Left lung (tissue), 14 donors: ENCODE measurements at regions of chr19 and their contacts with region 1.

Region 1: GRCh38 chr19:15555759-15556633 is 47.7 kb downstream of the CYP4F22 start:
- DNase-seq: peak; percentile 76 to 97 (median 90)
- ATAC-seq: peak; percentile 97
- H3K4me3 ChIP-seq: peak overlapping the region; percentile 10 to 34
- H3K27ac ChIP-seq: peak overlapping the region in 1 of 2 donors; percentile 28
- H3K4me1 ChIP-seq: peaks cover 0 to 20% of the 10 kb centered on the region in 2 donors
- H3K27me3 ChIP-seq: peaks cover 6 to 73% of the 10 kb centered on the region in 2 donors
- CTCF ChIP-seq: peak; percentile 51 to 62

Region 2: DNA sequence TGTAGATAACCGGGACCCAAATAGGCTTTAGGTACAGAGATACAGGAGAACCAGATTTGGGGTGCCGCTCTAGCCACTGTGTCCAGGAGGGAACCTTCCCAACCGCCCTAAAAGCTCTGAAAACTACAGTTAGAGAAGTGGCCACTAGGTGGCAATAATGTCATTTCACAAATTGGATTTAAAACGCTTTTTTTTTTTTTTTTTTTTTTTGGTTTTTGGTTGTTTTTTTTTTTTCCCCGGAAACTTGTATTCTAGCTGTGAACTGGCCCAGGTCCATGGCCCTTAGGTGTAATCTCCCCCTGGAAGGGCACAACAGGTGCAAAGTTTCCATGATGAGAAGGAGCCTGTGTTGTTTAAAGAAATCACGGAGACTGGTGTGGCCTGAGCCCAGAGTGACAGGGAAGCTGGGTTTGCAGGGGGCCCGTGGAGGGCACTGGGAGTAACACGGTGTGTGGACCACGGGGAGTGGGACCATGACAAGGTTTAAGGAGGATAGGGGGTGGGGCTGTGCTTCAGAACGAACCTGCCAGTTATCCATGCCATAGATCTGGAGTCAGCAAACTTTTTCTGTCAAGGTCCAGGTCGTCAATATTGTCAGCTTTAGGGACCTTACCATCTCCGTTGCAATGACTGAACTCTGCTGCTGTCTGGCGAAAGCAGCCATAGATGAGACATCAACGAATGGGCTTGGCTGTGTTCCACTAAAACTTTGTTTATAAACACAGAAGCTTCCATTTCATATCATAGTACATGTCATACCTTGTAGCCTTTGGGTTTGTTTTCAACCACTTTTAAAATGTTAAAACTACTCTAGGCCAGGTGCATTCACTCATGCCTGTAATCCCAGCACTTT is 463.9 kb before region 1 on chr19:
- intact Hi-C with region 1: loop called in 1 of 2 experiments (anchors 10 kb)
- DNase-seq: peak in 2 of 4 donors; percentile 57 to 81
- ATAC-seq: peak; percentile 84
- H3K4me3 ChIP-seq: no peak overlapping the region
- H3K27ac ChIP-seq: no peak overlapping the region
- H3K4me1 ChIP-seq: no peaks in the 10 kb centered on the region
- H3K27me3 ChIP-seq: peaks cover 0 to 9% of the 10 kb centered on the region in 2 donors
- CTCF ChIP-seq: peak; percentile 60 to 81

Region 3: DNA sequence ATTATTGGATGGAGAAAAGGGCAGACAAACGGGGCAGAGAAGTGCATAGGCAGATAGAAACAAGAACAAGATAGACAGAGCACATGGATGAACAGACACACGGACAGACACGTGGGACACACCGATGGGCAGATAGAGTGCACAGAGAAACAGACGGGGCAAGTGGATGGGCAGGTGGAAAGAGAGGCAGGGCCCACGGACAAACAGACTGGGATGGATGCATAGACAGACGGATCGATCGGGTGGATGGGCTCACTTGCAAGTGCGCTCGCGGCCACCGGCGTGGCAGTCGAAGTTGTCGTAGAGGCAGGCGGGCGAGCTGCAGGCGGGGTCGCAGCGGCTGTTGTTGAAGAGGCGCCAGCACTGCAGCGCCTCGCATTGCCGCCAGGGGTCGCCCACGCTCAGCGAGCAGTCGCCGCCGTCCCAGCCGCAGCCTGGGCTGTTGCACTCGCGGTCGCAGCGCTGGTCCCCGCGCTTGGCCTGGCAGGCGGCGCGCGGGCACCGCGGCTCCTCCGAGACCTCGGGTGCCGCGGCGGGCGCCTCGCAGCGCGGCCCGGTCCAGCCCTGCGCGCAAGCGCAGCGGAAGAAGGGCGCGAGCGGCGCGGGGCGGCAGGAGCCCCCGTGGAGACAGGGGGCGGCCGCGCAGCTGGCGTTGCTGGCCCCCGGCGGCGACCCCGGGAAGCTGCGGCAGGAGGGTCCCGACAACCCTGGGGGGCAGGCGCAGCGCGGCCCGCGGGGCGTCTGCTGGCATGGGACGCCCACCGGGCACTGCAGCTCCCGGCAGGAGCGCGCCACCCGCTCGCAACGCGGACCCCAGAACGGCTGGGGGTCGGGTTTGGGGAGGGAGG is 378.5 kb before region 1 on chr19:
- intact Hi-C with region 1: loop called in 1 of 2 experiments (anchors 5 kb)
- DNase-seq: peak; percentile 72 to 99 (median 85)
- ATAC-seq: peak; percentile 87
- H3K4me3 ChIP-seq: no peak overlapping the region
- H3K27ac ChIP-seq: no peak overlapping the region
- H3K4me1 ChIP-seq: peaks cover 0 to 10% of the 10 kb centered on the region in 2 donors
- H3K27me3 ChIP-seq: peaks cover 0 to 19% of the 10 kb centered on the region in 2 donors
- CTCF ChIP-seq: peak; percentile 95 to 97

Region 4: DNA sequence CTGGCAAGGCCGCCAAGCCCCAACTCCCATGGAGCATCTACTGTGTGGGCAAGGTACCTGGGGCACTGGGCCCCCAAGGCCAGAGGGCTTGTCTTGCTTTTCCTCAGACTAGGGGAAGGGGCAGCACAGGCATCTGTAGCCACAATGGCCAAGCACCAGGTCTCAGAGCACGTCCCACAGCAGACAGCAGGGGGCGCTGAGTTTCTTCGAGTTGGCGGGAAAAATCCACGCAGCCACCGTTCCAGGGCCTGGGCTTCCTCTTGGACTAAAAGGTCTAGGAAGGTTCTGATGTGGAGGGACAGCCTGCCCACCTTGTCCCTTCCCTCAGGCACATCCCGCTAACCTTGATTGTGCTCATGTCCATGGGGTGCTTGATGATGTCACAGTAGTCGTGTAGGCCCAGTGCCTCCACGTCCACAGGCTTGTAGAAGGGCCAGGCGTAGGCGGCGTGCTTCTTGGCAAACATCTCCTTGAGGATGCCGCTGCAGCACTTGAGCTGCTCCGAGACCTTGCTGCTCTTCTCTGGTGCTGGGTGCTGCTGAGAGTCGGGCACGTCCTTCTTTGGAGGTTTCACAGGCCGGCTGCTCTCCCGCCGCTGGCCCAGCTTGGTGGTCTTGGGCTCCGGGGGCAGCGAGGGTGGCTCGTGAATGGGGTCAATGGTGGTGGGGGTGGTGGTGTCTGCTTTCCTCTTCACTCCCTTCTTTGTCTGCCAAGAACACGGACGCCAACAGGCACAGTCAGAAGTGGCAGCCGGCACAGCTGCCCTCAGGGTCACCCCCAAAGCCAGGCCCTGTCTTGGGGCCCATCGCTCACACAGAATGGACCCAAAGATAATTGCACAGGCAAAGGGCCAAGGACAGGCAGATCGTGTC is 291.7 kb before region 1 on chr19:
- intact Hi-C with region 1: loop called in 1 of 2 experiments (anchors 5 kb)
- DNase-seq: peak; percentile 25 to 88 (median 68)
- ATAC-seq: peak; percentile 66
- H3K4me3 ChIP-seq: no peak overlapping the region
- H3K27ac ChIP-seq: peak overlapping the region in 1 of 2 donors; percentile 64
- H3K4me1 ChIP-seq: peaks cover 20 to 46% of the 10 kb centered on the region in 2 donors
- H3K27me3 ChIP-seq: no peaks in the 10 kb centered on the region
- CTCF ChIP-seq: peak; percentile 59 to 83